Transverse colon (tissue), 4 donors: ENCODE measurements at regions of chr19 and their contacts with region 1.

Region 1: DNA sequence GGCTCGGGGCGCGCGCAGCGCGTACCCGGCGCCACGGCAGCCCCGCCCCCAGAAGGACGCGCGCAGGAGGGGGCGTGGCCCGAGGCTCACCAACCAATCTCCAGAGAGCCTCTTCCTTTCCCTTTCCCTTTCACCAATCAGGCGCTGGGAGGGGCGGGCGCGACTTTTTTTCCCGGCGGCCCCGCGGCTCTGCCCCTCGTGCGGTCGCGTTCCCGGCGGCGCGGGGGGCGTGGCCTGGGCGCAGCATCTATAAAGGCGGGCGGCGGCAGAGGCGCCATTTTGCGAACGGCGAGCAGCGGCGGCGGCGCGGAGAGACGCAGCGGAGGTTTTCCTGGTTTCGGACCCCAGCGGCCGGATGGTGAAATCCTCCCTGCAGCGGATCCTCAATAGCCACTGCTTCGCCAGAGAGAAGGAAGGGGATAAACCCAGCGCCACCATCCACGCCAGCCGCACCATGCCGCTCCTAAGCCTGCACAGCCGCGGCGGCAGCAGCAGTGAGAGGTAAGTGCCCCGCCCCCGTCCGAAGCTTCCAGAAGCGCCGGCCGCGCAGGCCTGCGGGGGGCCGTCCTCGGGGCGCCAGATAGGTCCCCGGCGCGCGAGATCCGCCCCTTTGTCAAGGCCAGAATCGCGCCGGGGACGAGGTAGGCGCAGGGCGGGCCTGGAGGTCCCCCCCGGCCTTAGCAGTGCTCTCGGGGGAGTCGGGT is 12.6 kb downstream of the PEAK3 start:
- DNase-seq: peak; percentile 99
- H3K4me3 ChIP-seq: peak overlapping the region; percentile 92 to 100 (median 96)
- H3K27ac ChIP-seq: peak overlapping the region; percentile 97 to 99 (median 99)
- H3K4me1 ChIP-seq: peaks cover 35 to 56% (median 52%) of the 10 kb centered on the region in 4 donors
- H3K27me3 ChIP-seq: no peaks in the 10 kb centered on the region
- CTCF ChIP-seq: peak in 4 of 5 experiments; percentile 18 to 69 (median 36)
- EP300 ChIP-seq: peak; percentile 27
- POLR2A ChIP-seq: peak; percentile 100

Region 2: DNA sequence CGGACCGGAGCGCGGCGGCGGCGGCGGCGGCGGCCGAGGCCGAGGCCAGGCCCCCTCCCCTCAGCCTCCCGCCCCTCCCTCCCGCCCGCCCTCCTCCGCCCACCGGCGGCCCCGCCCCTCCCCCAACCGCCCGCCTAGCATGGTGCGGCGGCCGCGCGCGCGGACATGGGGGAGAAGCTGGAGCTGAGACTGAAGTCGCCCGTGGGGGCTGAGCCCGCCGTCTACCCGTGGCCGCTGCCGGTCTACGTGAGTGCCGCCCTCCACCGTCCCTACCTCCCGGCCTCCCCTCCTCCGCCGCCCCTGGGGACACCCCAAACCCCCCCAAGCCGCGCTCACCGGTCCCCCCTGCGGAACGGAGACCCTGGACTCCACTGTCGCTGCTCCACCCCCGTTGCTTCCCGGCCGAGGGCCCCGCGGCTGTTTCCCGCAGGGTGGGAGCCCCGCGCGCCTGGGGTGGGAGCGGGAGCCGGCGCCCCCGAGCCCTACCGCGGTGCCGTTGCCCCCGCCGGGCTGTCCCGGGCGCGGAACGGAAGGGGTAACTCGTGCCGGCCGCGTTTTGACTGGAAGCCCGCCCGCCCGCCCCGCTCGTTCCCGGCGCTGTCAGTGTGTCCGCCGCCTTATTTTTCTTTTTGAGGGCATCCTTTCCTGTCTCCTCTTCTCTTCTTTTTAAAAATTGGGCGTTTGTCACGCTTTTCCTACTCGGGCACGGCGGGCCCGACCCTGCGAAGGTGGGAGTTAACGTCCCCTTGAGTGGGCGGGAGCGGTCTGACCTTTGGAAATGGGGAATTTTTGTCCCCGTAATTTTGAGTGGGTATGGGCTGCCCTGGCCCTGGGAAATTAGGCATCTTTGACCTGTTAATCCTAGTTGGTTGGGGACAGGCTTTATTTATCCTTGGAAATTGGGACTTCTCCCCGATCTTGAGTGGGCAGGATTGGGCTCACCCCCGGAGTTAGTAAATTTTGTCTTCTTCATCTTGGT is 105.1 kb before region 1 on chr19:
- in situ Hi-C with region 1: loop called in 1 of 4 experiments (anchors 25 kb)
- intact Hi-C with region 1: loop called (anchors 5 kb)
- DNase-seq: no peak
- H3K4me3 ChIP-seq: peak overlapping the region; percentile 72 to 100 (median 91)
- H3K27ac ChIP-seq: peak overlapping the region; percentile 92 to 99 (median 98)
- H3K4me1 ChIP-seq: peaks cover 32 to 52% (median 46%) of the 10 kb centered on the region in 4 donors
- H3K27me3 ChIP-seq: no peaks in the 10 kb centered on the region
- CTCF ChIP-seq: no peak
- EP300 ChIP-seq: no peak
- POLR2A ChIP-seq: no peak

Region 3: GRCh38 chr19:2236314-2237050 is 32.9 kb before region 1 on chr19 and contains the starts of genes PLEKHJ1 and SF3A2:
- in situ Hi-C with region 1: no loop called
- intact Hi-C with region 1: loop called (anchors 1 kb)
- DNase-seq: peak; percentile 97
- H3K4me3 ChIP-seq: peak within 1 kb of the TSS; percentile 72 to 98 (median 90)
- H3K27ac ChIP-seq: peak within 1 kb of the TSS; percentile 96 to 99 (median 98)
- H3K4me1 ChIP-seq: peaks cover 44 to 67% (median 64%) of the 10 kb centered on the region in 4 donors
- H3K27me3 ChIP-seq: no peaks in the 10 kb centered on the region
- CTCF ChIP-seq: peak; percentile 98 to 100 (median 99)
- EP300 ChIP-seq: peak; percentile 35
- POLR2A ChIP-seq: peak; percentile 78
- total RNA-seq, gene PLEKHJ1: 184 to 332 (median 254) TPM
- total RNA-seq, gene SF3A2: 35.8 to 54.6 (median 41.6) TPM